Activated naive CD4-positive, alpha-beta T cell treated with anti-CD3 and anti-CD28 coated beads, Interleukin-2, amount 10 ng/mL, durations not matched to agents 7 days and 5 days (primary cell): ENCODE measurements at regions of chr12 and their contacts with region 1.

Region 1: GRCh38 chr12:22100958-22101748 is 55.1 kb downstream of the CMAS start:
- DNase-seq: peak; percentile 58
- H3K4me3 Mint-ChIP-seq: no peak overlapping the region
- H3K27ac Mint-ChIP-seq: peak overlapping the region; percentile 56
- H3K4me1 Mint-ChIP-seq: peaks cover 14% of the 10 kb centered on the region
- H3K27me3 Mint-ChIP-seq: peaks cover 7% of the 10 kb centered on the region

Region 2: GRCh38 chr12:22121227-22121626 is 20.1 kb after region 1 on chr12:
- CTCF ChIA-PET with region 1: interaction called, 13 read pairs
- DNase-seq: peak; percentile 50
- H3K4me3 Mint-ChIP-seq: no peak overlapping the region
- H3K27ac Mint-ChIP-seq: no peak overlapping the region
- H3K4me1 Mint-ChIP-seq: peaks cover 5% of the 10 kb centered on the region
- H3K27me3 Mint-ChIP-seq: peaks cover 2% of the 10 kb centered on the region

Region 3: DNA sequence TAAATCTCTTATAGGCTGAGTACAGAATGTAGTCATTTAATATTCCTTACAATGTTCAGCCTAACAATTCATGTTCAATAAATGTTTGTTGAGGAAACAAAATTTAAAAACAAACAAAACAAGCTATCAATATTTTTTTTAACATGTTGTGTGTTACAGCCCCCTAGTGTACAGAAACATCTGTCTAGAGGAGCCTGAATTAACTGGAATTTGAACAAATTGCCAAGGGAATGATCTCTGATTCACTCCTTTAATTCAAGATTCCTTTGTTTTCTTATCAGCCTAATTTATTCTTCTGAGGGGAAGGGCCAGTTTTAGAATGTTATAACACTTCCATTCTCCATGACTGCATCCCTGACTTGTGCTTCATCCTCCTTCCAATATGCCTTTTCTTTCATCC is 72.0 kb after region 1 on chr12:
- CTCF ChIA-PET with region 1: interaction called, 32 read pairs
- DNase-seq: no peak
- H3K4me3 Mint-ChIP-seq: no peak overlapping the region
- H3K27ac Mint-ChIP-seq: no peak overlapping the region
- H3K4me1 Mint-ChIP-seq: peaks cover 5% of the 10 kb centered on the region
- H3K27me3 Mint-ChIP-seq: peaks cover 4% of the 10 kb centered on the region

Region 4: DNA sequence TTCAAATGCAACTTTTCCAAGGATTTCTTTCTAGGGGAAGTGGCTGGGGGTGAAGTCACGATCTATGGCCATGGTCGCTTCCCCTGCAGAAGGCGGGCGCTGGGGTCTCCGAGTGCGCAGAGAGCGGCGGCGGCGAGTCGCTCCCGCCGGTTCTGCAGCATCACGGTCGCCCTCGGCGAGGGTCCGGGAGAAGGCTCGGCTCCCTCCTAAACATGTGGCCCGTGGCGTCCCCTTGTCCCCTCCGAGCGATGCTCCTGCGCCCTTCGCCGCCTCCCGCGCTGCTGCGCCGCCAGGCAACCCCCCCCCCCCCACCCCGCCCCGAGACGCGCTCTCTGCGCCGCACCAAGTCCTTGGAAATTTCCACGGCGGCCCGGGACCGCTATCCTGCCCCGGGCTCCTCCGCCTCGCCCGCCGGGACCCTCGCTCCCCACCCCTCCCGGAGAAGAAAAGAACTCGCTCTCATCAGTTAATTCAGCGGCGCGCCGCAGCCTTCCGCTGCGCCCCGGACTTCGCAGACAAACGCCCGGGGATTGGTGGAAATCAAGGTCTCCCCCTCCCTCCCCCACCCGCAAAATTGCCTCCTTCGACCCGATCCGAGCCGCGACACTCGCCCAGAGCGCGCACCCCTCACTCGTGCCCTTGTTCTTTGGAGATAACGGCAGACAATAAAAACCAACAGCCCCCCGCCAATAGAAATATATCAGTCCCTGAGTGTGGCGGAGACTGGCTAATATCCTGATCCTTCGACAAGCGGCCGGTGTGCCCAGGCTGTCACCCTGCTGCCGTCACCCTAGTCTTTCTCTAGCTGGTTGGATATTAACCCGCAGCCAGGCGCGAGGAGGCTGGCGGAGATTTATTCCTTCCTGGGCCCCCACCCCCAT is 233.5 kb after region 1 on chr12 and contains the start of gene ST8SIA1:
- CTCF ChIA-PET with region 1: interaction called, 26 read pairs
- DNase-seq: peak; percentile 55
- H3K4me3 Mint-ChIP-seq: peak within 1 kb of the TSS; percentile 79
- H3K27ac Mint-ChIP-seq: peak within 1 kb of the TSS; percentile 67
- H3K4me1 Mint-ChIP-seq: peaks cover 20% of the 10 kb centered on the region
- H3K27me3 Mint-ChIP-seq: peaks cover 43% of the 10 kb centered on the region